ENCODE measurements at regions of chr12 and their contacts with region 1.

Region 1: DNA sequence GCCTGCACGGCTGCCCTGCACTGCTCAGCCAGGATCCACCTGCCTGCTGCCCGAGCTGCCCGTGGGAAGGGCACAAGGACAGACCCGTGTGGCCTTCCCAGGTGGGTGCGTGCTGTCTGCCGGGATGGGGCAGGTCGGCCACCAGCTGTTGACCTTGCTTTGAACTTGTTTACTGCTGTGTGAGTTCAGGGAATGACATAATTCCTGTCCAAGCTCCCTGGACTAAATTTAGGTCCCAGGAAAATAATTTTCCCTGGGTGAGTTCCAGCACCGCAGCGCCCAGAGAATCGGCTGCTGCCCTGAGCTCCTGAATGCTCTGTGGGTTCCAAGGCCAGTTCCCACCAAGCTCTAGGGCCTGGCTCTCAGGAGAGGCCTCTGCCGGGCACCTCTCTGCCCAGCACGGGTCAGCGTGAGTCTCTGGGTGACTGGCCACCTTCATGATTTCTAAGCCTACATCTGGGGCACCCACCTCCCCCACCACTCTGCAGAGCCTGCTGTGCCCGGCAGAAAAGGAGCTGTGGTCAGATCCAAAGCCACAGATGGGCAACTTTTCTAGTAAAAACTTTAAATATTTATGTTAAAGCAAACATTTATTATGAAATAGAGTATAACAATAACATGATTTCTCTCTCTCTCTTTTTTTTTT is 27.2 kb upstream of the MLXIP start:
- DNase-seq: no peak
- H3K4me3 Mint-ChIP-seq: no peak overlapping the region
- H3K27ac Mint-ChIP-seq: no peak overlapping the region
- H3K4me1 Mint-ChIP-seq: peaks cover 6% of the 10 kb centered on the region
- H3K27me3 Mint-ChIP-seq: no peaks in the 10 kb centered on the region

Region 2: GRCh38 chr12:122078141-122079032 is 27.0 kb after region 1 on chr12 and contains the start of gene MLXIP:
- CTCF ChIA-PET with region 1: interaction called, 21 read pairs
- DNase-seq: peak; percentile 92
- H3K4me3 Mint-ChIP-seq: peak within 1 kb of the TSS; percentile 99
- H3K27ac Mint-ChIP-seq: peak within 1 kb of the TSS; percentile 91
- H3K4me1 Mint-ChIP-seq: peaks cover 49% of the 10 kb centered on the region
- H3K27me3 Mint-ChIP-seq: peaks cover 3% of the 10 kb centered on the region

Region 3: GRCh38 chr12:122130150-122130549 is 78.8 kb after region 1 on chr12:
- CTCF ChIA-PET with region 1: interaction called, 103 read pairs
- DNase-seq: no peak
- H3K4me3 Mint-ChIP-seq: no peak overlapping the region
- H3K27ac Mint-ChIP-seq: no peak overlapping the region
- H3K4me1 Mint-ChIP-seq: peaks cover 3% of the 10 kb centered on the region
- H3K27me3 Mint-ChIP-seq: no peaks in the 10 kb centered on the region

Region 4: DNA sequence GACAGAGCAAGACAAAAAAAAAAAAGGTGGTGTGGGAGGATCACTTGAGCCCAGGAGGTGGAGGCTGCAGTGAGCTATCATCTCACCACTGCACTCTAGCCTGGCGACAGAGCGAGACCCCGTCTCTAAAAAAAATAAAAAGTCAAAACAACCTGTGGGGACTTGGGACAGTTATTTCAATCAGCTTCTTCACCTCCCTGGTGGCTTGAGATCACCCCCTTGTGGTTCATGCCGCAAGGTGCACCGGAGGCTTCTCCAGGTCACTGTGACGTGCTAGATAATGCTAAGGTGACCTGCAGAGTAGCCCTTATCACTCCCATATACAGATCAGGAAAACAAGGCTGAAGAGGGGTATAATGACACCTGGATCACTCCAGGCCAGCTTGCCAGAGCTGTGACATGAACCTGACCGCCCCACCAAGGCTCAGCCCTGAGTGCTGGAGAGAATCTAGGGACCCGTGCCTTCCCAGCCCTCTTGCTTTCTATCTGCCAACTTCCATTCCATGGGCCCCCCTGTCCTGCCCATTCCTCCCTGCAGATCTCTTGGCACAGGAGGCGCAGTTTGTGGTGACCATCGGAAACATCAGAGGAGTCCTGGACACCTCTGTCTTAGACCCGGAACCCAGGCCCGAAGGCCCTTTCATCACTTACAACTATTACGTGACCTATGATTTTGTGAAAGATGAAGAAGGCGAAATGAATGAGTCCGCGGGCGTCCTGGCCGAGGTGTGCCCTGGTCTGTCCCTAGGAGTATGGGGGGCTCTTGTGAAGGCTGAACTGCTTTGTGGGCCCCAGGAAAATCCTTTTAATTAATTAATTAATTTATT is 139.7 kb after region 1 on chr12:
- CTCF ChIA-PET with region 1: interaction called, 22 read pairs
- DNase-seq: peak; percentile 84
- H3K4me3 Mint-ChIP-seq: no peak overlapping the region
- H3K27ac Mint-ChIP-seq: no peak overlapping the region
- H3K4me1 Mint-ChIP-seq: no peaks in the 10 kb centered on the region
- H3K27me3 Mint-ChIP-seq: peaks cover 40% of the 10 kb centered on the region

Measured in activated naive CD4-positive, alpha-beta T cell treated with anti-CD3 and anti-CD28 coated beads, Interleukin-2, amount 10 ng/mL, durations not matched to agents 7 days and 5 days (primary cell).